Right ventricle myocardium inferior (tissue), 1 donor: ENCODE measurements at regions of chr2 and their contacts with region 1.

Region 1: GRCh38 chr2:85678794-85679672 is 11.0 kb upstream of the SFTPB start:
- DNase-seq: peak; percentile 95
- ATAC-seq: peak; percentile 90

Region 2: GRCh38 chr2:85813982-85814801 is 135.2 kb after region 1 on chr2:
- intact Hi-C with region 1: loop called (anchors 1 kb)
- DNase-seq: peak; percentile 95
- ATAC-seq: peak; percentile 98

Region 3: GRCh38 chr2:86147793-86148192 is 468.8 kb after region 1 on chr2:
- intact Hi-C with region 1: no loop called
- DNase-seq: no peak
- ATAC-seq: no peak